Testis (tissue), 5 donors: ENCODE measurements at regions of chr14 and their contacts with region 1.

Region 1: GRCh38 chr14:59739794-59740193 is 130.8 kb downstream of the RTN1 start:
- DNase-seq: no peak
- H3K4me3 ChIP-seq: no peak overlapping the region
- H3K27ac ChIP-seq: no peak overlapping the region
- H3K4me1 ChIP-seq: no peaks in the 10 kb centered on the region
- H3K27me3 ChIP-seq: no peaks in the 10 kb centered on the region
- CTCF ChIP-seq: no peak
- POLR2A ChIP-seq: no peak

Region 2: GRCh38 chr14:59570114-59570513 is 169.7 kb before region 1 on chr14:
- intact Hi-C with region 1: loop called (anchors 5 kb)
- DNase-seq: no peak
- H3K4me3 ChIP-seq: no peak overlapping the region
- H3K27ac ChIP-seq: no peak overlapping the region
- H3K4me1 ChIP-seq: no peaks in the 10 kb centered on the region
- H3K27me3 ChIP-seq: no peaks in the 10 kb centered on the region
- CTCF ChIP-seq: no peak
- POLR2A ChIP-seq: no peak